CD8-positive, alpha-beta T cell (primary cell): ENCODE measurements at regions of chr1 and their contacts with region 1.

Region 1: GRCh38 chr1:150207281-150207971 is 28.5 kb downstream of the ANP32E start:
- DNase-seq: no peak
- ATAC-seq: no peak
- H3K4me3 ChIP-seq: no peak overlapping the region
- H3K4me3 Mint-ChIP-seq: no peak overlapping the region
- H3K27ac ChIP-seq: no peak overlapping the region
- H3K27ac Mint-ChIP-seq: no peak overlapping the region
- H3K4me1 ChIP-seq: no peaks in the 10 kb centered on the region
- H3K4me1 Mint-ChIP-seq: no peaks in the 10 kb centered on the region
- H3K27me3 ChIP-seq: no peaks in the 10 kb centered on the region
- H3K27me3 Mint-ChIP-seq: no peaks in the 10 kb centered on the region
- CTCF ChIP-seq: no peak

Region 2: DNA sequence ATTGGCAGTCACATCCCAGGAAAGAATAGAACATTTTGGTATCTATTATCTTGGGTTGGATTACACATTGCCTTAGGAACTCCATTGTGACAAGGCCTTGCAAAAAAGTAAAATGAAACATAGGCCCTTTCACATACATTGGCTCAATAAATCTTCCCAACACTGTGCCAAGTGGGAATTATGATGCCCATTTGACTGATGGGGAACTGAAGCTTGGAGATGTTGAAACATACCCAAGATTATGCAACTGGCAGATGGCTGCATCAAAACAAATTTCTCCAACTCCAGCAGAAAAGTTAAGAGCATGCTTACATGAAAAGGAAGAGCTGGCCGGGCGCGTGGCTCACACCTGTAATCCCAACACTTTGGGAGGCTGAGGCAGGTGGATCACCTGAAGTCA is 30.8 kb before region 1 on chr1:
- CTCF ChIA-PET with region 1: no interaction called
- POLR2A ChIA-PET with region 1: no interaction called
- intact Hi-C with region 1: loop called in 1 of 2 experiments (anchors 1 kb)
- DNase-seq: no peak
- ATAC-seq: no peak
- H3K4me3 ChIP-seq: no peak overlapping the region
- H3K4me3 Mint-ChIP-seq: no peak overlapping the region
- H3K27ac ChIP-seq: no peak overlapping the region
- H3K27ac Mint-ChIP-seq: no peak overlapping the region
- H3K4me1 ChIP-seq: no peaks in the 10 kb centered on the region
- H3K4me1 Mint-ChIP-seq: no peaks in the 10 kb centered on the region
- H3K27me3 ChIP-seq: no peaks in the 10 kb centered on the region
- H3K27me3 Mint-ChIP-seq: no peaks in the 10 kb centered on the region
- CTCF ChIP-seq: no peak

Region 3: DNA sequence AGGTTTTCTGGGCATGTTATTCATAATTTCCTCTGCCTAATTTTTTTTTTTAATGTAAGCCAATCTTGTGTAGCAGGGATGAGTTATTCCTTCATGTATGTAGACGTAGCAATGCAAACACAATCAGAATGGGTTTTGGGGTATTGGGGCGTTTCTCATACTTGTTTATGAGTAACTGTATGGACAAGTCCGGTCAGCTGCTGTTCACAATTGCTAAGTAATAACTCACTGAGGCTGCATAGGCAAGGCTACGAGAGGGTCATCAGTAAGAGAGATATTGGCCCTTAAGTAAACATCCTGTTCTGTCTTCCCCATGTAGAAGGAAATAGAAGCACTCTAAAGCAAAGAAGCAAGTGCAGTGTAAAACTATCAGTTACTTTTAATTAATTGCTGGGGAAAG is 270.3 kb after region 1 on chr1:
- CTCF ChIA-PET with region 1: no interaction called
- POLR2A ChIA-PET with region 1: no interaction called
- intact Hi-C with region 1: no loop called
- DNase-seq: no peak
- ATAC-seq: no peak
- H3K4me3 ChIP-seq: no peak overlapping the region
- H3K4me3 Mint-ChIP-seq: no peak overlapping the region
- H3K27ac ChIP-seq: no peak overlapping the region
- H3K27ac Mint-ChIP-seq: peak overlapping the region; percentile 75
- H3K4me1 ChIP-seq: no peaks in the 10 kb centered on the region
- H3K4me1 Mint-ChIP-seq: peaks cover 11% of the 10 kb centered on the region
- H3K27me3 ChIP-seq: no peaks in the 10 kb centered on the region
- H3K27me3 Mint-ChIP-seq: no peaks in the 10 kb centered on the region
- CTCF ChIP-seq: no peak